Endothelial cell of umbilical vein (primary cell): ENCODE measurements at regions of chr16 and their contacts with region 1.

Region 1: GRCh38 chr16:74577882-74578366 is 29.0 kb downstream of the GLG1 start:
- DNase-seq: peak; percentile 65
- H3K4me3 ChIP-seq: no peak overlapping the region
- H3K27ac ChIP-seq: peak overlapping the region; percentile 5
- H3K4me1 ChIP-seq: peaks cover 16% of the 10 kb centered on the region
- H3K27me3 ChIP-seq: no peaks in the 10 kb centered on the region
- CTCF ChIP-seq: no peak
- POLR2A ChIP-seq: no peak

Region 2: GRCh38 chr16:74372953-74373846 is 204.7 kb before region 1 on chr16:
- CTCF ChIA-PET with region 1: no interaction called
- POLR2A ChIA-PET with region 1: no interaction called
- dilution Hi-C with region 1: no loop called
- intact Hi-C with region 1: no loop called
- DNase-seq: no peak
- H3K4me3 ChIP-seq: no peak overlapping the region
- H3K27ac ChIP-seq: no peak overlapping the region
- H3K4me1 ChIP-seq: peaks cover 3% of the 10 kb centered on the region
- H3K27me3 ChIP-seq: peaks cover 2% of the 10 kb centered on the region in 2 experiments
- CTCF ChIP-seq: no peak
- POLR2A ChIP-seq: no peak

Region 3: GRCh38 chr16:74591876-74592614 is 14.1 kb after region 1 on chr16:
- CTCF ChIA-PET with region 1: interaction called, 4 read pairs
- POLR2A ChIA-PET with region 1: no interaction called
- dilution Hi-C with region 1: no loop called
- intact Hi-C with region 1: loop called (anchors 2 kb)
- DNase-seq: no peak
- H3K4me3 ChIP-seq: no peak overlapping the region
- H3K27ac ChIP-seq: no peak overlapping the region
- H3K4me1 ChIP-seq: peaks cover 13% of the 10 kb centered on the region
- H3K27me3 ChIP-seq: no peaks in the 10 kb centered on the region
- CTCF ChIP-seq: no peak
- POLR2A ChIP-seq: no peak

Region 4: GRCh38 chr16:74617206-74617788 is 39.4 kb after region 1 on chr16:
- CTCF ChIA-PET with region 1: no interaction called
- POLR2A ChIA-PET with region 1: no interaction called
- dilution Hi-C with region 1: no loop called
- intact Hi-C with region 1: no loop called
- DNase-seq: peak; percentile 48
- H3K4me3 ChIP-seq: no peak overlapping the region
- H3K27ac ChIP-seq: no peak overlapping the region
- H3K4me1 ChIP-seq: no peaks in the 10 kb centered on the region
- H3K27me3 ChIP-seq: no peaks in the 10 kb centered on the region
- CTCF ChIP-seq: no peak
- POLR2A ChIP-seq: no peak

Region 5: DNA sequence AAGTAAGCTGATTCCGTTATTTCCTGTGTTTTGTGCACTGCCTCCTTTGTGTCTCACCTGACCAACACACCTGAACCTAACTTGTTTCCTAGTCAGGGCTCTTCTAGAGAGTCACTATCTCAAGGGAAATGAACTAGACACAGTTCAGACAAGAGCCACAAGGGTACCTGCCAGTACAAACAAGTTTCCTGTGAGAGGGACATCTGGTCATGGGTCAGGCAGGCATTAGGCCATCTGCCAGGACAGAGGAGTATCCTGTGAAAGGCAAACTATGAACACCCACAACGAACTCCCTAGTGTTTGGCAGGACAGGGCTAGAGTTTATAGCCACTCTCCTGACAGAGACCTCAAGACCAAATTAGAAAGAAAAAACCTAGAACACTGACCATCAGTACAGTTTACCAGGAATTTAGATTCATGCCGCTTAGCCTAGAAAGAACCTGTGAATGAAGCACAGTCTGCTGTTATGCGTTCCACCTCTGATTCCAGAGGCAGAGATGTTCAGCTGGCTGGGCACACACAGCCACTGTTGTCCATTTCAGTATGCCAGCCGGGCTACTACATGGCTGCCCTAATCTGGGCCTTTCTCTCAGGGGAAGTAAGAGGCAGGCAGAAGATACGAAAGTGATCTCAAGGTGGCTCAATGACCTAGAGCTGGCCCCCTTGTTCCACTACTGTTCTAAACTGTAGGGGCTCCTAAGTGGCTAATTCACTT is 49.7 kb after region 1 on chr16:
- CTCF ChIA-PET with region 1: no interaction called
- POLR2A ChIA-PET with region 1: no interaction called
- dilution Hi-C with region 1: no loop called
- intact Hi-C with region 1: no loop called
- DNase-seq: no peak
- H3K4me3 ChIP-seq: no peak overlapping the region
- H3K27ac ChIP-seq: no peak overlapping the region
- H3K4me1 ChIP-seq: no peaks in the 10 kb centered on the region
- H3K27me3 ChIP-seq: no peaks in the 10 kb centered on the region
- CTCF ChIP-seq: no peak
- POLR2A ChIP-seq: no peak

Region 6: DNA sequence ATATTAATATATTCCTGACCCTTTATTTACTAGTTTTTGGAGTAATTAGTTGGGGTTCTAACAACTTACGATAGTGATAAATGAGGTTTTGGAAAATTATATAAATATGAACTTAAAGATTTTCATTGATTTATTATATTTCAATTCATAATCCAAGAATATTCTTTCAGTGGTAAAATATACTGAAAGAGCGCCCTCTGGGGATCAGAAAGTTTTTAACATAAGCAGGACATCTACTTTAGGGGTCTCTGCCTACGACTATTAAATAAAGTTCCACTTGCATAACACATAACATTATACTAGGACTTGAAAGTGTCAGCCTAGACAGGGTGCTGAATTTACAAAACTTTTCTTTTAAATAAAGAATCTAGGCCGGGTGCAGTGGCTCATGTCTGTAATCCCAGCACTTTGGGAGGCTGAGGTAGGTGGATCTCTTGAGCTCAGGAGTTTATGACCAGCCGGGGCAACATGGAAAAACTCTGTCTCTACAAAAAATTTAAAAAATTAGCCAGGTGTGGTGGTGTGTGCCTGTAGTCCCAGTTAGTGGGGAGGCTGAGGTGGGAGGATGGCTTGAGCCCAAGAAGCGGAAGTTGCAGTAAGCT is 73.1 kb after region 1 on chr16:
- CTCF ChIA-PET with region 1: no interaction called
- POLR2A ChIA-PET with region 1: no interaction called
- dilution Hi-C with region 1: no loop called
- intact Hi-C with region 1: no loop called
- DNase-seq: peak; percentile 27
- H3K4me3 ChIP-seq: no peak overlapping the region
- H3K27ac ChIP-seq: no peak overlapping the region
- H3K4me1 ChIP-seq: peaks cover 5% of the 10 kb centered on the region
- H3K27me3 ChIP-seq: no peaks in the 10 kb centered on the region
- CTCF ChIP-seq: peak in 1 of 2 donors; percentile 27
- POLR2A ChIP-seq: no peak